Kidney (tissue), 22 donors: ENCODE measurements at regions of chr4 and their contacts with region 1.

Region 1: DNA sequence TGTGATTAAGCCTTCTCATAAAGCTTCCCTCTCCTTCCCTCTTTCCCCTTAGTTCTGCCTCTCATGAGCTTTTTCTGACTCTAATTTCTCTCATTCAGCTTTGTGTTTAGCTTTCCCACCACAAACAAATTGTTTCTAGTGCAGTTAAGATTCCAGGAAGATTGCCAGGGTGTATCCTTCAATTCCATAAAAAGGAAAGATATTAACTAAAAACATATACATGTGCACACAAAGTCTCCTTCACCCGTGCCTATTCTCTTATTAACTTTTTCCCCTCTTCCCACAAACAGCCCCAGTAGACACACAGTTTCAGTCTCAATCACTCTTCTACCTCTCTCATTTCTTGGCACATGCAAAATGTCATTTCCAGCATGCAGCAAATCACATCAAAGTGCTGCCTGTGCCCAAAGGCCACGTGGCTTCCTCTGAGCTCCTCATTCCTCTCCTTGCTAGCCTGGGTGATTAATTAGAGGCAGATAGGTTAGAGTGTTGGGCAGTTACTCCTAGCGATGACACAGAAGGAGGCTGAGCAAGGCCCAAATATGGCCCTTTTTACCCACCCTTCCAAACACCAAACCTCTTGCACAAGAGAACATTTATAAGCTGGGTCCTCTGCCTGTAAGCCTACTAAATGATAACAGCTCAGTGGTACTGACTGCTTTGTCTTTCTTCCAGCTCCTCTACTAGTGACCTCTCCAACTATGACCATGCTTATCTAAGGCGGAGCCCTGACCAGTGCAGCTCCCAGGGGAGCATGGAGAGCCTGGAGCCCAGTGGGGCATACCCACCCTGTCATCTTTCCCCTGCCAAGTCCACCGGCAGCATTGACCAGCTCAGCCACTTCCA is 159.6 kb downstream of the SOWAHB start:
- DNase-seq: peak in 2 of 5 donors; percentile 70
- H3K4me3 ChIP-seq: no peak overlapping the region
- H3K27ac ChIP-seq: peak overlapping the region in 1 of 2 donors; percentile 55
- H3K4me1 ChIP-seq: peaks cover 0 to 14% (median 2%) of the 10 kb centered on the region in 3 donors
- H3K27me3 ChIP-seq: no peaks in the 10 kb centered on the region
- CTCF ChIP-seq: no peak

Region 2: GRCh38 chr4:76515975-76516843 is 222.1 kb before region 1 on chr4:
- intact Hi-C with region 1: loop called (anchors 10 kb)
- DNase-seq: no peak
- H3K4me3 ChIP-seq: no peak overlapping the region
- H3K27ac ChIP-seq: no peak overlapping the region
- H3K4me1 ChIP-seq: peaks cover 0 to 15% (median 2%) of the 10 kb centered on the region in 3 donors
- H3K27me3 ChIP-seq: no peaks in the 10 kb centered on the region
- CTCF ChIP-seq: no peak